PC-9 (cell line): ENCODE measurements at regions of chr12 and their contacts with region 1.

Region 1: GRCh38 chr12:117060246-117060928 is 38.8 kb downstream of the TESC start:
- DNase-seq: peak in 1 of 2 experiments; percentile 33
- H3K4me3 ChIP-seq: no peak overlapping the region
- H3K27ac ChIP-seq: no peak overlapping the region
- H3K4me1 ChIP-seq: no peaks in the 10 kb centered on the region
- H3K27me3 ChIP-seq: peaks cover 34% of the 10 kb centered on the region; the same call in 1 of the 2 replicates
- CTCF ChIP-seq: no peak

Region 2: DNA sequence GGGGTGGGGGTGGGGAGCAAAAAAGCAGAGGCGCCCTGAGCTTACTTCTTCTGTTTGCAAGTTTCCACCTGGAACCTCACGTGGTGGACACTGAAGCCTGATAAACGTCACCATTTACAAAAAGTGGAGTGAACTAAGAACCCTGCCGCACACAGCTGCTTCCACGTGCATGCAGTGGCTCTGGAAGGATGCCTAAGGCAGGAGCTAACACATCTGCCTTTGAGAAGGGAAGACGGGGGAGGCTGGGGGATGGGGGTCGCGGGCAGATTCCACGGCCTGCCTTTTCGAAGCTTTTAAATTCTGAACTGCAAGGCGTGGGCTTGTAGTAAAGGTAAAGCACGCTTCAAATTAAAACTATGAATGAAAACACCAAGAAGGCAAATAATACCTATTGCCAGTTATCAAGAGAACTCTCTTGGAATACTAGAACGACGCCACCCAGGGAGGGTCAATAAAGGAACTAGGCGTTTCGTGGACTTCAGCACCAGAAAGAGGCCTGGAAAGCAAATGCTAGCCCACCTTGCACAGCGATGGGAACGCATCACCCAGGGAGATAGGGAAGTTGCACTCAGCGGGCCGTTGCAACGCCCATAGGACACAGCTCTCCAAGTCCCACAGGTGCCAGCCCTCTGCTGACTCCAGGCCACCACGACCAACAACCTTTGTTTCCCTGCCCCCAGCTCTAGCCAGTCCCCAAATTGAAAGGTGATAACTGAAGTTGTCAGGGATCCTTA is 22.9 kb before region 1 on chr12:
- CTCF ChIA-PET with region 1: interaction called, 13 read pairs
- POLR2A ChIA-PET with region 1: no interaction called
- intact Hi-C with region 1: no loop called
- DNase-seq: no peak
- H3K4me3 ChIP-seq: no peak overlapping the region
- H3K27ac ChIP-seq: no peak overlapping the region
- H3K4me1 ChIP-seq: no peaks in the 10 kb centered on the region
- H3K27me3 ChIP-seq: no peaks in the 10 kb centered on the region
- CTCF ChIP-seq: no peak

Region 3: GRCh38 chr12:117134059-117134458 is 73.7 kb after region 1 on chr12:
- CTCF ChIA-PET with region 1: interaction called, 12 read pairs
- POLR2A ChIA-PET with region 1: no interaction called
- intact Hi-C with region 1: no loop called
- DNase-seq: no peak
- H3K4me3 ChIP-seq: no peak overlapping the region
- H3K27ac ChIP-seq: no peak overlapping the region
- H3K4me1 ChIP-seq: no peaks in the 10 kb centered on the region
- H3K27me3 ChIP-seq: no peaks in the 10 kb centered on the region
- CTCF ChIP-seq: no peak

Region 4: GRCh38 chr12:117437516-117438255 is 377.3 kb after region 1 on chr12:
- CTCF ChIA-PET with region 1: no interaction called
- POLR2A ChIA-PET with region 1: no interaction called
- intact Hi-C with region 1: no loop called
- DNase-seq: no peak
- H3K4me3 ChIP-seq: no peak overlapping the region
- H3K27ac ChIP-seq: no peak overlapping the region
- H3K4me1 ChIP-seq: no peaks in the 10 kb centered on the region
- H3K27me3 ChIP-seq: peaks cover 64% of the 10 kb centered on the region
- CTCF ChIP-seq: no peak